ENCODE measurements at regions of chr22 and their contacts with region 1.

Region 1: DNA sequence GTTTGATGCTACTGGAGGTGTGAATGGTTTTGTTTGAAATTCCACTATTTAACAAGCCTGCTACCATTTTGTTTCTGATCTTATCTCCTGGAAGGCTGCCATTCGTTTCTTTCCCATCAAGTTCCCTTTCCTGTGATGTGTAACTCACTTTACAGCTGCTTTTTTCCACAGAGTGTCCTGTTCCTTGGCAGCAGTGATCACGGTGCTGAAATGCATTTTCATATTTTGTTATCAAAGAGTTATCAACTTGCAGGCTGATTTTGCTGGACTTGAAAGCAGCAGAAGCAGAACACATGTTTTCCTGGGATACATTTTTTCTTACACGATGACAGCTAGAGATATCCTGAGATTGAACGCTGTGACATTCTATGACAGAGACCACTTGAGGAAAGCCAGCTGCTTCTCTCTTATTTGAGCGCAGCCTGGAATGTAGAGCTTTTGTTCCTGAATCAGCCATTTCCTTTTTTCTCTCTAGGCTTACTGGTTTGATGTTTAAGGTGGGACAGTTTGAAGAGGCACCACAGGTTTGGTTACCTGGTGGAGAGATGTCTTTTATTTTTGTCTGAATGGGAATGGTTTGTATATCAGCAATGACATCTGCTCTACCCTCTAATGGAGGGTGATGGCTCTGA is 34.7 kb downstream of the PRR14L start:
- DNase-seq: no peak

Region 2: GRCh38 chr22:31790240-31790639 is 75.0 kb after region 1 on chr22:
- in situ Hi-C with region 1: no loop called
- DNase-seq: no peak

Region 3: DNA sequence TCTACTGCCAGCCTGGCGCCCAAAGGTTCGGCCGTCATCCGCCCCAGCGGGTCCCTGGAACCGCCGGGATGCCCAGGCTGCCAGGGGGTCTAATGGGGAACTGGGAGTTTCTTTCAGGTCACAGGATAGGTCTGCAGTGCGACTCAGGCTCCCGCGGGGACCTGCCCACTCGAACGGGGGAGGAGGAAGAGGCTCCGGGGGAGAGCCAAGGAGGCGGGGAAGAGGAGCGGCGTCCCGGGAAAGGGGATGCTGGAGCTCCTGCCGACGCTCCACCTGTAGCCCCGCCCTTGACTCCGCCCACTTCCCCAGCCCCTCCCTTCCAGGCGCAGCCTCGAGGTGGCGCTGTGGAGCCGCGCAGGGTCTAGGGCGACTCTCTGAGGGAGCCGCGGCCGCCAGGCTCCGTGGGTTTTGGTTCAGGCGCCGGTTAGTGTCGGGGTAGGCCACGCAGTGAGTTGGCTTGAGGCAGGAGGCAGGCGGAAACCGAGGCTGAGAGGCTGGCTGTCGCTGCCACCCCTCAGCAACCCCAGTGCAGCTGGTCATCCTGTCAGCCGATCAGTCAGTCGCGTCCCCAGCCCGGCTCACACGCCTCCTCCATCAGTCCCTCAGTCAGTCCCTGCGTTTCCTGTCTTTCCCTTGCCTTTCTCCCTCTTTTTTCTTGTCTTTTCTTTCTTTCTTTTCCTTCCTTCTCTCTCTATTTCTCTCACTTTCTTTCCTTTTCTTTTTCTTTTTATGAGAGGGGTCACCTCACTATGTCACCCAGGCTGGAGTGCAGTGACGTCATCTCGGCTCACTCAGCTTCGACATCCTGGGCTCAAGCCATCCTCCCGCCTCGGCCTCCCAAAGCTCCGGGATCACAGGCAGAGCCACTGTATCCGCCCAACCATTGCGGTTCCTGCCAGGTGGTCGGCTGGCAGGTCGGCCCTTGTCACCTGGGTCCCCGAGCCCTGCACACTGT is 255.5 kb after region 1 on chr22:
- in situ Hi-C with region 1: loop called (anchors 25 kb)
- DNase-seq: peak; percentile 90